Dendritic cell treated with granulocyte-macrophage colony-stimulating factor and Interleukin-4, amounts not matched to agents 40 ng/mL and 50 ng/mL, for 4 days (primary cell): ENCODE measurements at regions of chr5 and their contacts with region 1.

Region 1: DNA sequence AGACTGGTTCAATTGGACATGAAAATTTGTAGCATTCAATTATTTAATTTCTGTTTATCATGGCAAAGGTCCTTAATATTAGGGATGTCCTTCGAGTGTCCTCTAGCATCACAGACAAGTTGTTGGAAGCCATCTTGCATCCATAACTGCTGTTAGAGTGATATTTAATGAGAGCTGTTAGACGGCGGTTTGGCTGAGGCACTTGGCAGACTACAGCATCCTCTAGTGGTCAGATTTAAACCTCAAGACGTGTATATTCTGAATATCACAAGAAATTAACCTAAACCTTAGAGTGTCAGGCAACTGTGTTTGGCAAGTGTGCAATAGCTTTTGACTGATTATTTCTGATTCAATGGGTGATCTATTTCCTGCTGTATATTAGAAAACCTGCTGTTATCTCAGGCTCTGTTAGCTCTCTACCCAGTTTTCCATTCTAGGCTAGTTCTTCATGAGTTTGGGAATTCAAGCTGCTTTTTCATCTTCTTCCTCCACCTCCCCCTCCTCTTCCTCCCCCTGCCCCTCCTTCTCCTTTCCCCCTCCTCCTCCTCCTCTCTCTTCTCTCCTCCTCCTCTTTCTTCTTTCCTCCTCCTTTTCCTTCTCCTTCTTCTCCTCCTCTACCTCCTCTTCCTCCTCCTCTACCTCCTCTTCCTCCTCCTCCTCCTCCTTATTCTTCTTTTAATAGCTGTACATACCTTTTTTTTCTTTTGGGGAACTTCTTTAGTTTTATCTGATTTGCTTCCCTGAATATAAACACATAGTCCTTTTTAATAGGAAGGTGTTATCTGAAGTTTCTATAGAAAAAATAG is 8.6 kb downstream of the SPINK1 start:
- H3K4me3 Mint-ChIP-seq: no peak overlapping the region
- H3K27ac Mint-ChIP-seq: no peak overlapping the region
- H3K4me1 Mint-ChIP-seq: peaks cover 28% of the 10 kb centered on the region
- H3K27me3 Mint-ChIP-seq: no peaks in the 10 kb centered on the region

Region 2: GRCh38 chr5:147453875-147454814 is 368.7 kb before region 1 on chr5:
- intact Hi-C with region 1: loop called (anchors 10 kb)
- H3K4me3 Mint-ChIP-seq: peak overlapping the region; percentile 96
- H3K27ac Mint-ChIP-seq: peak overlapping the region; percentile 25
- H3K4me1 Mint-ChIP-seq: peaks cover 29% of the 10 kb centered on the region
- H3K27me3 Mint-ChIP-seq: peaks cover 46% of the 10 kb centered on the region

Region 3: GRCh38 chr5:147628058-147628895 is 194.6 kb before region 1 on chr5:
- intact Hi-C with region 1: loop called (anchors 1 kb)
- H3K4me3 Mint-ChIP-seq: no peak overlapping the region
- H3K27ac Mint-ChIP-seq: no peak overlapping the region
- H3K4me1 Mint-ChIP-seq: peaks cover 3% of the 10 kb centered on the region
- H3K27me3 Mint-ChIP-seq: no peaks in the 10 kb centered on the region

Region 4: GRCh38 chr5:147690595-147690994 is 132.3 kb before region 1 on chr5:
- intact Hi-C with region 1: no loop called
- H3K4me3 Mint-ChIP-seq: no peak overlapping the region
- H3K27ac Mint-ChIP-seq: no peak overlapping the region
- H3K4me1 Mint-ChIP-seq: no peaks in the 10 kb centered on the region
- H3K27me3 Mint-ChIP-seq: no peaks in the 10 kb centered on the region

Region 5: DNA sequence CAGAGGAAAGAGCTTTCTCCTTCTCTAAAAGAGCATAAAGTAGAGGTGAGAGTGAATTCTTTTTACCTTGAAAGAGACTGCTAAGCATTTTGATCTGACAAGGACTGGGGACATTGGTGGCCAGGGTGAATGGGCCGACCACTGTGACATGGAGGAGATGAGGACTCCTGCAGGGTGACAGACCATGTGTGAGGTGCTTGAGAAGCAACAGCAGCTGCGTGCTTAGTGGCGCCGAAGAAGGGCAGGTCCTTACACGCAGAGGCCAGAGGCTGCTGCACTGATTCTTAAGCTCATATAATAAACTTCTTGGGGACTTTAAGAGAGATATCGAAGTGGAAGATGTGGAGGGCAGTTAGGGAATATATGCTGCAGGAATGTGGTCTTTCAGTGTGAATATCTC is 31.7 kb before region 1 on chr5:
- intact Hi-C with region 1: no loop called
- H3K4me3 Mint-ChIP-seq: no peak overlapping the region
- H3K27ac Mint-ChIP-seq: no peak overlapping the region
- H3K4me1 Mint-ChIP-seq: peaks cover 7% of the 10 kb centered on the region
- H3K27me3 Mint-ChIP-seq: no peaks in the 10 kb centered on the region

Region 6: GRCh38 chr5:147805030-147805454 is 17.8 kb before region 1 on chr5:
- intact Hi-C with region 1: loop called (anchors 2 kb)
- H3K4me3 Mint-ChIP-seq: no peak overlapping the region
- H3K27ac Mint-ChIP-seq: peak overlapping the region; percentile 81
- H3K4me1 Mint-ChIP-seq: peaks cover 28% of the 10 kb centered on the region
- H3K27me3 Mint-ChIP-seq: no peaks in the 10 kb centered on the region